ENCODE measurements at regions of chr17 and their contacts with region 1.

Region 1: GRCh38 chr17:74833501-74834377 is 25.9 kb downstream of the GRIN2C start:
- DNase-seq: no peak
- ATAC-seq: peak; percentile 94
- H3K4me3 ChIP-seq: no peak overlapping the region
- H3K27ac ChIP-seq: no peak overlapping the region
- H3K4me1 ChIP-seq: peaks cover 12% of the 10 kb centered on the region; the same call in 1 of the 2 replicates
- H3K27me3 ChIP-seq: no peaks in the 10 kb centered on the region
- CTCF ChIP-seq: no peak
- EP300 ChIP-seq: no peak
- POLR2A ChIP-seq: no peak
- RAD21 ChIP-seq: no peak

Region 2: DNA sequence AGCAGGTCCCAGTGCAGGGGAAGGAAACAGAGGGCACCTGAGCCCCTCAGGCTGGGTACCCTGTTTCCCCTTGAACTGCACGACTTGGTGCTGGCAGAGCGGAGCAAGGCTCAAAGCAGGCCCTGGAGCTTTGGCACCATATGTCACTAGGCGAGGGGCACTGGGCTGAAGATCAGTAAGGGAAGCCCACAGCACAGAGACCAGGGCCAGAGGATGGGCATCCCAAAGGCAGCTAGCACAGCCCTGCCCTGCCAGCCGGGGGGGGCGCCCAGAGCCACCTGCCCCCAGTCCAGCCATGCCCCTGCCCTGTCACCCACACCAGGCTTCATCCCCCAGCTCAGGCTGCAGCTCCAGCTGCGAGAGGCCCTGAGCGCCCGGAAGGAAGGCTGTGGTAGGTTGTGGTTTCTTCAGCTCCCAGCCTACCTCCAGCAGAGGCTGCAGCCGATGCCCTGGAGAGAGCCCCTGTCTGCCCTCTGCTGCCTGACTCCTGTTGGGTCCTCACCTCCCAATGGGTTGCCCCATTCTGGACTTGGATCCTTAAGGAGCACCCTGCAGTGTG is 74.4 kb before region 1 on chr17:
- CTCF ChIA-PET with region 1: no interaction called
- POLR2A ChIA-PET with region 1: no interaction called
- RAD21 ChIA-PET with region 1: no interaction called
- SMC1A ChIA-PET with region 1: no interaction called
- in situ Hi-C with region 1: no loop called
- intact Hi-C with region 1: no loop called
- DNase-seq: no peak
- ATAC-seq: peak; percentile 90
- H3K4me3 ChIP-seq: no peak overlapping the region
- H3K27ac ChIP-seq: peak overlapping the region; percentile 1
- H3K4me1 ChIP-seq: peaks cover 21% of the 10 kb centered on the region
- H3K27me3 ChIP-seq: no peaks in the 10 kb centered on the region
- CTCF ChIP-seq: peak; percentile 16 to 32 (median 30); a peak in 3 of 6 replicates
- EP300 ChIP-seq: no peak
- POLR2A ChIP-seq: no peak
- RAD21 ChIP-seq: peak; percentile 28

Region 3: GRCh38 chr17:74864866-74865395 is 31.2 kb after region 1 on chr17:
- CTCF ChIA-PET with region 1: interaction called, 11 read pairs
- POLR2A ChIA-PET with region 1: no interaction called
- RAD21 ChIA-PET with region 1: no interaction called
- SMC1A ChIA-PET with region 1: no interaction called
- in situ Hi-C with region 1: no loop called
- intact Hi-C with region 1: no loop called
- DNase-seq: no peak
- ATAC-seq: peak; percentile 81
- H3K4me3 ChIP-seq: no peak overlapping the region
- H3K27ac ChIP-seq: no peak overlapping the region
- H3K4me1 ChIP-seq: peaks cover 4% of the 10 kb centered on the region; the same call in 1 of the 2 replicates
- H3K27me3 ChIP-seq: peaks cover 5 to 8% of the 10 kb centered on the region in 2 experiments
- CTCF ChIP-seq: peak; percentile 91 to 98 (median 97)
- EP300 ChIP-seq: no peak
- POLR2A ChIP-seq: no peak
- RAD21 ChIP-seq: peak; percentile 71

Measured in GM12878 (cell line).